ENCODE measurements at regions of chr4 and their contacts with region 1.

Region 1: GRCh38 chr4:123102897-123103471 is 180.6 kb upstream of the NUDT6 start:
- DNase-seq: no peak
- ATAC-seq: peak in 3 of 4 donors; percentile 57 to 85 (median 66)
- H3K4me3 ChIP-seq: no peak overlapping the region
- H3K27ac ChIP-seq: no peak overlapping the region
- H3K4me1 ChIP-seq: peaks cover 0 to 20% (median 0%) of the 10 kb centered on the region in 12 donors
- H3K27me3 ChIP-seq: no peaks in the 10 kb centered on the region
- CTCF ChIP-seq: peak; percentile 55 to 85 (median 74)
- POLR2A ChIP-seq: no peak

Region 2: GRCh38 chr4:123564758-123565346 is 461.9 kb after region 1 on chr4:
- intact Hi-C with region 1: loop called in 3 of 10 experiments (anchors 10 kb)
- DNase-seq: peak in 3 of 5 donors; percentile 34 to 60 (median 46)
- ATAC-seq: peak; percentile 86 to 95 (median 92)
- H3K4me3 ChIP-seq: no peak overlapping the region
- H3K27ac ChIP-seq: no peak overlapping the region
- H3K4me1 ChIP-seq: peaks cover 0 to 14% (median 5%) of the 10 kb centered on the region in 12 donors
- H3K27me3 ChIP-seq: no peaks in the 10 kb centered on the region
- CTCF ChIP-seq: peak; percentile 63 to 87 (median 76)
- POLR2A ChIP-seq: no peak

Region 3: GRCh38 chr4:123649645-123650391 is 546.8 kb after region 1 on chr4:
- intact Hi-C with region 1: loop called in 4 of 10 experiments (anchors 10 kb)
- DNase-seq: peak in 3 of 5 donors; percentile 22 to 40 (median 40)
- ATAC-seq: peak; percentile 44 to 78 (median 68)
- H3K4me3 ChIP-seq: peak overlapping the region in 5 of 12 donors; percentile 6 to 28 (median 20)
- H3K27ac ChIP-seq: peak overlapping the region; percentile 3 to 82 (median 56)
- H3K4me1 ChIP-seq: peaks cover 0 to 47% (median 11%) of the 10 kb centered on the region in 12 donors
- H3K27me3 ChIP-seq: no peaks in the 10 kb centered on the region
- CTCF ChIP-seq: no peak
- POLR2A ChIP-seq: no peak

Region 4: DNA sequence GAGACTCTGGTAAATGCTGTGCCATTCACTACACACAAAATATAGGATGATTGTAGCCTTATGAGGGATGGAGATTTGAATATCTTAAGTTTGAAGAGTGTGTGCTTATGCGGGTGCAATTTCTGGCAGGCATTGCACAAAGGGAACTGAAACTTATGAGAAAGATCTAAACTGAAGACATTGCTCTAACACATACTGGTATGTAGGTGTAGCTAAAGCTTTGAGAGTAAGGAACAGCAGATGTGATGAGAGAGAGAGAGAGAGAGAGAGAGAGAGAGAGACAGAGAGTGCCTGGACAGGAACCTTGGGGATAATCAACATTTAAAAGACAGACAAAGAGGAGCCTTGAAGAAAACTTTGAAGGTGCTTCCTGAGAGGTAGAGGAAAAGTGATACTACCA is 673.3 kb after region 1 on chr4:
- intact Hi-C with region 1: loop called in 2 of 10 experiments (anchors 10 kb)
- DNase-seq: no peak
- ATAC-seq: no peak
- H3K4me3 ChIP-seq: no peak overlapping the region
- H3K27ac ChIP-seq: peak overlapping the region in 3 of 12 donors; percentile 41 to 73 (median 45)
- H3K4me1 ChIP-seq: peaks cover 0 to 21% (median 8%) of the 10 kb centered on the region in 12 donors
- H3K27me3 ChIP-seq: no peaks in the 10 kb centered on the region
- CTCF ChIP-seq: no peak
- POLR2A ChIP-seq: no peak

Region 5: GRCh38 chr4:124262211-124263179 is 1159.5 kb after region 1 on chr4:
- intact Hi-C with region 1: loop called in 9 of 10 experiments (anchors 1 to 10 kb)
- DNase-seq: peak in 4 of 5 donors; percentile 36 to 58 (median 51)
- ATAC-seq: peak in 3 of 4 donors; percentile 82 to 96 (median 87)
- H3K4me3 ChIP-seq: no peak overlapping the region
- H3K27ac ChIP-seq: peak overlapping the region in 1 of 12 donors; percentile 19
- H3K4me1 ChIP-seq: peaks cover 0 to 6% (median 0%) of the 10 kb centered on the region in 12 donors
- H3K27me3 ChIP-seq: no peaks in the 10 kb centered on the region
- CTCF ChIP-seq: peak; percentile 69 to 95 (median 84)
- POLR2A ChIP-seq: no peak